ENCODE measurements at regions of chr7 and their contacts with region 1.

Region 1: GRCh38 chr7:42940985-42941847 is 9.0 kb downstream of the MRPL32 start:
- DNase-seq: peak; percentile 94
- H3K4me3 Mint-ChIP-seq: no peak overlapping the region
- H3K27ac Mint-ChIP-seq: no peak overlapping the region
- H3K4me1 Mint-ChIP-seq: peaks cover 47% of the 10 kb centered on the region
- H3K27me3 Mint-ChIP-seq: no peaks in the 10 kb centered on the region

Region 2: DNA sequence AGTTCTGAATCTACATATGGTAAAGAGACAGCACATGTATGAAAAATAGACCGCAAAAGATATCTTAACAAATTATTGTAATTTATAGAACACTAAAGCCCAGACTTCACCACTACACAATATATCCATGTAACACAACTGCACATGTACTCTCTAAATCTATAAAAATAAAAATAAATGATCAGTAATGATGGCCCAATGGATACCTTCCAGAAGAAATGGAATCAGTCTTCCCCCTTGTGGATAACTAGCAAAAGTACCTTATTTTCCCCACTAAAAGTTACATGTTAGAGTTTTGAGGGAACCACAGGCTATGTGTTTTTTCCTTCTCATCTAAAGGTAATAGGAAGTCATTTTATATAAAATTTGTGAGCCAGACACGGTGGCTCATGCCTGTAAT is 55.1 kb before region 1 on chr7:
- CTCF ChIA-PET with region 1: interaction called, 4 read pairs
- intact Hi-C with region 1: loop called (anchors 2 kb)
- DNase-seq: no peak
- H3K4me3 Mint-ChIP-seq: no peak overlapping the region
- H3K27ac Mint-ChIP-seq: no peak overlapping the region
- H3K4me1 Mint-ChIP-seq: peaks cover 18% of the 10 kb centered on the region
- H3K27me3 Mint-ChIP-seq: no peaks in the 10 kb centered on the region

Region 3: GRCh38 chr7:43108255-43109011 is 167.2 kb after region 1 on chr7:
- CTCF ChIA-PET with region 1: interaction called, 10 read pairs
- intact Hi-C with region 1: loop called (anchors 1 kb)
- DNase-seq: peak; percentile 82
- H3K4me3 Mint-ChIP-seq: no peak overlapping the region
- H3K27ac Mint-ChIP-seq: no peak overlapping the region
- H3K4me1 Mint-ChIP-seq: no peaks in the 10 kb centered on the region
- H3K27me3 Mint-ChIP-seq: peaks cover 51% of the 10 kb centered on the region

Region 4: GRCh38 chr7:43260980-43261878 is 320.0 kb after region 1 on chr7:
- CTCF ChIA-PET with region 1: interaction called, 13 read pairs
- intact Hi-C with region 1: loop called (anchors 1 kb)
- DNase-seq: peak; percentile 80
- H3K4me3 Mint-ChIP-seq: no peak overlapping the region
- H3K27ac Mint-ChIP-seq: no peak overlapping the region
- H3K4me1 Mint-ChIP-seq: no peaks in the 10 kb centered on the region
- H3K27me3 Mint-ChIP-seq: peaks cover 12% of the 10 kb centered on the region

Region 5: GRCh38 chr7:43353902-43354301 is 412.7 kb after region 1 on chr7:
- CTCF ChIA-PET with region 1: no interaction called
- intact Hi-C with region 1: loop called (anchors 5 kb)
- DNase-seq: no peak
- H3K4me3 Mint-ChIP-seq: no peak overlapping the region
- H3K27ac Mint-ChIP-seq: no peak overlapping the region
- H3K4me1 Mint-ChIP-seq: no peaks in the 10 kb centered on the region
- H3K27me3 Mint-ChIP-seq: peaks cover 20% of the 10 kb centered on the region

Region 6: GRCh38 chr7:43454936-43455518 is 513.8 kb after region 1 on chr7:
- CTCF ChIA-PET with region 1: interaction called, 3 read pairs
- intact Hi-C with region 1: loop called (anchors 1 kb)
- DNase-seq: no peak
- H3K4me3 Mint-ChIP-seq: no peak overlapping the region
- H3K27ac Mint-ChIP-seq: no peak overlapping the region
- H3K4me1 Mint-ChIP-seq: no peaks in the 10 kb centered on the region
- H3K27me3 Mint-ChIP-seq: no peaks in the 10 kb centered on the region

Region 7: GRCh38 chr7:44097064-44097932 is 1156.1 kb after region 1 on chr7:
- CTCF ChIA-PET with region 1: no interaction called
- intact Hi-C with region 1: no loop called
- DNase-seq: peak; percentile 62
- H3K4me3 Mint-ChIP-seq: no peak overlapping the region
- H3K27ac Mint-ChIP-seq: no peak overlapping the region
- H3K4me1 Mint-ChIP-seq: peaks cover 13% of the 10 kb centered on the region
- H3K27me3 Mint-ChIP-seq: no peaks in the 10 kb centered on the region

Measured in activated naive CD4-positive, alpha-beta T cell treated with anti-CD3 and anti-CD28 coated beads for 36 hours (primary cell).